Breast epithelium (tissue), 4 donors: ENCODE measurements at regions of chr11 and their contacts with region 1.

Region 1: GRCh38 chr11:113562981-113563461 is 87.8 kb upstream of the DRD2 start:
- DNase-seq: no peak
- H3K4me3 ChIP-seq: no peak overlapping the region
- H3K27ac ChIP-seq: peak overlapping the region in 1 of 2 donors; percentile 40
- H3K4me1 ChIP-seq: no peaks in the 10 kb centered on the region
- H3K27me3 ChIP-seq: no peaks in the 10 kb centered on the region
- CTCF ChIP-seq: no peak
- POLR2A ChIP-seq: no peak

Region 2: DNA sequence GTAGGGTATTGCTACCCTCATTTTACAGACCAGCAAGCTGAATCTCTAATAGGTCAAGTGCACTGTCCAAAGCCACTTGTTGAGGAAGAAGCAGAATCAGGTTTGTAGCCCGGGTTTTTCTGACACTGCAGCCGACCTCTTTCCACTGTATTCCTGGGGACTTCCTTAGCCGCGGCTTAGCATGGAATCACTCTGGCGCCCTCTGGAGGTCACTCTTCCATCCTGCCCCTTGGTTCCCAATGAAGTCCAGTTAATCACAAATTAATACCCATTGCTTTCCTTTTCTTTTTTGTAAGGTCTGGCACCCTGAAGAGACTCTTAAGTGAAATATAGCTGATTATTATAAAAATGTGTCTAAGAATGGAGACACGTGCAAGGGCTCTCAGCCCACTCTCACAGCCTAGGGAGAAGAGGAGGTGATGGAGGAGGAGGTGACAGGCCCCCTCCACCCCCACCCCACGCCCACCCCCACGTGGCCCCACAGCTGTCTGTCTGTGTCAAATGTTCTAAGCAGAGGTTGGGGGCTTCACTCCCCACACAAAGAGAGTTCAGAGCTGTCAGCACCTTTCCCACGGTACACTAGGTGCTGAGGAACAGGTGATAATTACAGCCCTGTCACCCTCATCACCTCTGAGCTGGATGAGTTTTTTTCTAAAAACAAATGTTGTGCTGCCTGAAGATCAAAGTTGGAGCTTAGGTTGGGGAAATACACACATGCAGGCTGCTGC is 30.2 kb before region 1 on chr11:
- intact Hi-C with region 1: loop called (anchors 1 kb)
- DNase-seq: peak; percentile 74 to 78
- H3K4me3 ChIP-seq: no peak overlapping the region
- H3K27ac ChIP-seq: no peak overlapping the region
- H3K4me1 ChIP-seq: no peaks in the 10 kb centered on the region
- H3K27me3 ChIP-seq: no peaks in the 10 kb centered on the region
- CTCF ChIP-seq: peak; percentile 40 to 86 (median 73)
- POLR2A ChIP-seq: no peak

Region 3: DNA sequence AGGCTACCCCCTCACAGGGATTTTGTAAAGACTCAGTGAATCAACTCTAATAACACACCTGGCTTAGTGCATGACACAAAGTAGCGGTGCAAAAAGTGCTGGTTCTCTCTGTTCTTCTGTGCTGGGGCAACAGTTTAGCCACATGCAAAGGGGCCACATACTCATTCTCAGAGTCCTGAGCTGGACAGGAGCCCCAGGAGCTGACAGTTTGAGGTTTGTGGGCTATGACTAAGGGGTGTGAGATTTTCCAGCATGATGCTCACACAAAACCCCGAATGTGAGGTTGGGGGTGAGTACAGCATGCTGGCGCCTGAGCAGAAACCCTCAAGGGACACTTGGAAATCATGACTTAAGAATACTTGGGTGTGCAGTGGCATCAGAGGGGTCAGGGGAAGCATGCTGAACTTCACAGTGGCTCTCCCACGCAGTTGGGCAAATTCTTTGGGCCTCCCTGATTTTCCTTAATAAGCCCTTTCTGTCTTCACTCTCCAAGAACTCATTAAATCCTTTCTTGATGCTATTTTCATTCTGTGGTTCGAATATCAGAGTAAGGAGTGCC is 112.1 kb after region 1 on chr11:
- intact Hi-C with region 1: no loop called
- DNase-seq: no peak
- H3K4me3 ChIP-seq: no peak overlapping the region
- H3K27ac ChIP-seq: peak overlapping the region in 1 of 2 donors; percentile 7
- H3K4me1 ChIP-seq: no peaks in the 10 kb centered on the region
- H3K27me3 ChIP-seq: no peaks in the 10 kb centered on the region
- CTCF ChIP-seq: no peak
- POLR2A ChIP-seq: no peak